Right ventricle myocardium inferior (tissue), 1 donor: ENCODE measurements at regions of chr18 and their contacts with region 1.

Region 1: GRCh38 chr18:58761241-58761969 is 90.1 kb downstream of the MALT1 start:
- DNase-seq: no peak
- ATAC-seq: peak; percentile 64

Region 2: GRCh38 chr18:58402247-58402646 is 359.2 kb before region 1 on chr18:
- intact Hi-C with region 1: loop called (anchors 5 kb)
- DNase-seq: no peak
- ATAC-seq: peak; percentile 18

Region 3: GRCh38 chr18:58671111-58671631 is 90.2 kb before region 1 on chr18 and contains the start of gene MALT1:
- intact Hi-C with region 1: loop called (anchors 5 kb)
- DNase-seq: peak; percentile 96
- ATAC-seq: peak; percentile 99
- total RNA-seq, gene MALT1: 11.8 TPM

Region 4: GRCh38 chr18:58727776-58728500 is 33.5 kb before region 1 on chr18:
- intact Hi-C with region 1: loop called (anchors 5 kb)
- DNase-seq: no peak
- ATAC-seq: peak; percentile 70